ENCODE measurements at regions of chr11 and their contacts with region 1.

Region 1: GRCh38 chr11:60913793-60914632 is at the start of gene TMEM109:
- DNase-seq: peak; percentile 91
- H3K4me3 ChIP-seq: peak within 1 kb of the TSS; percentile 83
- H3K27ac ChIP-seq: peak within 1 kb of the TSS; percentile 82
- H3K4me1 ChIP-seq: peaks cover 66% of the 10 kb centered on the region
- CTCF ChIP-seq: no peak
- total RNA-seq, gene TMEM109: 57.0 and 62.4 TPM in 2 replicates

Region 2: GRCh38 chr11:60899046-60899936 is 14.7 kb before region 1 on chr11:
- CTCF ChIA-PET with region 1: interaction called, 17 read pairs
- POLR2A ChIA-PET with region 1: interaction called, 21 read pairs
- intact Hi-C with region 1: no loop called
- DNase-seq: peak; percentile 51
- H3K4me3 ChIP-seq: no peak overlapping the region
- H3K27ac ChIP-seq: no peak overlapping the region
- H3K4me1 ChIP-seq: peaks cover 2% of the 10 kb centered on the region
- CTCF ChIP-seq: peak; percentile 99

Region 3: GRCh38 chr11:60924906-60925853 is 11.2 kb after region 1 on chr11:
- CTCF ChIA-PET with region 1: interaction called, 6 read pairs
- POLR2A ChIA-PET with region 1: interaction called, 8 read pairs
- intact Hi-C with region 1: loop called (anchors 1 kb)
- DNase-seq: no peak
- H3K4me3 ChIP-seq: peak overlapping the region; percentile 70
- H3K27ac ChIP-seq: no peak overlapping the region
- H3K4me1 ChIP-seq: peaks cover 28% of the 10 kb centered on the region
- CTCF ChIP-seq: no peak

Region 4: DNA sequence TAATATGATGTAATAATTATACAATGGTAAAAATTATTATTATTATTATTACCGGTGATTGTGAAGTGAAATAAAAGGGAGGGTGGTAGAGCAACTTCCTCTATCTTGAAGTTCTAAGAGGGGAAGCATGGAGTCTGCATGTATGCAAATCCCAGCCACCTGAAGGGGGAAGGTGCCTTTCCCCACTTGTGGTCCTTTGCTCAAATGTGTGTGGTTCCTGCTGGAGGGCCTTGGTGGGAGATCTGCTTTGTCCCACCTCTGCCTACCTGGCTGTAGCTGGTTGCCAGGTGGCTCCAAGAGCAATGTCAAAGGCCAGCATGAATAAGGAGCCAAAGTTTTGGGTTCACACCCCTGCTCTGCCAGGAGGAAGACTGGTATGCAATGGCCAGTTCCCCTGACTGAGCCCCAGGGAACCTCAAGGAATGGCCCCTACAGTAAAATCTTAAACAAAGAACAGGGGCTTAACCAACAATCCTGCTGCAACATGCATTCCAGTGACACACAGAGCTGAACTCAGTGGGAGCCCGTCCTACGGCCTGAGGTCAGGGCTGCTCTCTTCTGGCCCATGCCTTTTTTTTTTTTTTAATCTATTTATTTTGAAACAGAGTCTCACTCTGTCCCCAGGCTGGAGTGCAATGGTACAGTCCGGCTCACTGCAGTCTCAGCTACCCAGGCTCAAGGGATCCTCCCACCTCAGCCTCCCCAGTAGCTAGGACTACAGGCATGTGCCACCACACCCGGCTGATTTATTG is 18.8 kb after region 1 on chr11:
- CTCF ChIA-PET with region 1: interaction called, 6 read pairs
- POLR2A ChIA-PET with region 1: interaction called, 14 read pairs
- intact Hi-C with region 1: no loop called
- DNase-seq: peak; percentile 82
- H3K4me3 ChIP-seq: peak overlapping the region; percentile 22
- H3K27ac ChIP-seq: peak overlapping the region; percentile 75
- H3K4me1 ChIP-seq: peaks cover 29% of the 10 kb centered on the region
- CTCF ChIP-seq: no peak

Region 5: GRCh38 chr11:60951899-60952741 is 38.1 kb after region 1 on chr11 and contains the start of gene SLC15A3:
- CTCF ChIA-PET with region 1: interaction called, 5 read pairs
- POLR2A ChIA-PET with region 1: interaction called, 6 read pairs
- intact Hi-C with region 1: loop called (anchors 1 kb)
- DNase-seq: peak; percentile 86
- H3K4me3 ChIP-seq: peak within 1 kb of the TSS; percentile 64
- H3K27ac ChIP-seq: peak within 1 kb of the TSS; percentile 47
- H3K4me1 ChIP-seq: peaks cover 36% of the 10 kb centered on the region
- CTCF ChIP-seq: no peak
- total RNA-seq, gene SLC15A3: 7.2 and 12.6 TPM in 2 replicates

Region 6: DNA sequence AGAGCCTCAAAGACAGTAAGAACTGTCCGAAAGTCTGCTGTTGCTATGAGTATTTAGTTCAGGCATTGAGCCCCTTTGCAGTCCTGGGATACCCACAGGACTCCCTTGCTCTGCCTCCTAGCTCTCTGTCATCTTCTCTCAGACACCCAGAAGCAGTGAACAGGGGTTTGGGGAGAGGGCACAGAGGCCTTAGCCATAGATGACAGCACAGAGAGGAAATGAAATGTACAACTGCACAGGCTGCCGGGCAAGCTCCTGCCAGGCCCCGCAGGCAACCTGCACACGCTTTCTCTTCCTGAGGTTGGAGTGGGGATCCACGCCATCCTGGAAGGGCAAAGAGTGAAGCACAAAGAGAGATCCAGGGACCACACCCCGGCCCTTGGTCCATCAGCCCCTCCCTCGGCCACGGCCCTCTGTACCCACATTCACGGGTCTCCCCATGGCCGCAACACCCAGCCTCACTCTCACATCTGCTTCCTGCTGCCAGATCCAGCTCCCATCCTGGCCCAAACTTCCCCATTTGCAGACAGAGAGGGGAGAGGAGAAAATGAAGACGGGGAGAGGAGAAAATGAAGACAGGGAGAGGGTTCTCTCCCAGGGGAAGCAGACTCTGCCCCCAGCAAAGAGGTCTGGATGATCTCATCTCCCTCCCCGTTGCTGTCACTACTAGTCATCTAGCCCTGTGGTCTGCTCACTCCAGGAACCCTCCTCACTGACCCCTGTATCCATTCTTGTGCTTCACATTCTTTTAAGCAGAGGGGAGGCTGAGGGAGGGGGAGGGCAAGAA is 98.1 kb after region 1 on chr11:
- CTCF ChIA-PET with region 1: no interaction called
- POLR2A ChIA-PET with region 1: no interaction called
- intact Hi-C with region 1: no loop called
- DNase-seq: no peak
- H3K4me3 ChIP-seq: no peak overlapping the region
- H3K27ac ChIP-seq: no peak overlapping the region
- H3K4me1 ChIP-seq: no peaks in the 10 kb centered on the region
- CTCF ChIP-seq: no peak

Region 7: GRCh38 chr11:61129639-61130523 is 215.9 kb after region 1 on chr11:
- CTCF ChIA-PET with region 1: no interaction called
- POLR2A ChIA-PET with region 1: no interaction called
- intact Hi-C with region 1: loop called (anchors 2 kb)
- DNase-seq: peak; percentile 89
- H3K4me3 ChIP-seq: no peak overlapping the region
- H3K27ac ChIP-seq: no peak overlapping the region
- H3K4me1 ChIP-seq: peaks cover 8% of the 10 kb centered on the region
- CTCF ChIP-seq: peak; percentile 100

Region 8: DNA sequence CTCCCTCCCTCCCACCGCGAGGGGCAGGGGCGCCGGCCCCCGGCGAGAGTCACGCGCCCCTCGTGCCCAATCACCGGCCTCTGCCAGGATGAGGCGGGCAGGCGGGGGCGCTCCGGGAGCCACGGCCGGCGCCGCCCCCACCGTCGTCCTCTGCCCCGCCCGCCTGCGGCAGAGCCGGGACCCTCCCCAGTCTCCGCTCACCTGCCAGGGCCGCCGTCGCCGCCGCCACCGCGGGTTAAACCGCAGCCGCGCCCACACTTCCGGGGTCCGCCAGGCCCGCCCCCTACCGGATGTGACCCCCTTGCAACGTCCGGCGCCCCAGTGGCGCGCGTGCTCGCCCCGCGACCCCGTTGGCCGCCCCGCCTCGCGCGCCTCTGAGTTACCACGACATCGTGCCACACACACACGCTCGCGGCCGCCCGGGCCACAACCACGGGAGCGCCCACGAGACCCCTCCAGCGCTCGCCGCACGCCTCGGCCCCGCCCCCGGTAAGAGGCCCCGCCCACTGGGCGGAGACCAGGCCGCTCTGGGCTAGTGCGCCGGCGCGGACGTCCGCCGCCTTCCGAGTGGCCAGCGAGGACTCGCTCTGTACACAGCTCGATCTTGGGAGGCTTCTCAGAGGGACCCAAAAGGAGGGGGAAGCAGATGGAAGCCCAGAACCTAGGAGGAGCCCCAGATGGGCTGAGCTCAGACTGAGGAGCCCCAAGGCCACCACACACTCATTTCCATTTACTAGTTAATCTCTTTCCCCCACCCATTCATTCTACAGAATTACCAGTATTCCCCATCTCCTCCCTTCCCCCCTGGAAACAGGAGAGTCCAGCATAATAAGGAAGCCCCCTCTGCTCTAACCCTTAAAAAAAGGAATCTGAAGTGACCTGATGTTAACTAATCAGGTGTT is 247.4 kb after region 1 on chr11 and contains the start of gene VPS37C:
- CTCF ChIA-PET with region 1: no interaction called
- POLR2A ChIA-PET with region 1: interaction called, 3 read pairs
- intact Hi-C with region 1: loop called (anchors 2 kb)
- DNase-seq: peak; percentile 92
- H3K4me3 ChIP-seq: peak within 1 kb of the TSS; percentile 85
- H3K27ac ChIP-seq: peak within 1 kb of the TSS; percentile 82
- H3K4me1 ChIP-seq: peaks cover 28% of the 10 kb centered on the region
- CTCF ChIP-seq: no peak
- total RNA-seq, gene VPS37C: 10.2 and 10.3 TPM in 2 replicates

Measured in OCI-LY7 (cell line).